CD4-positive, alpha-beta T cell (primary cell): ENCODE measurements at regions of chr4 and their contacts with region 1.

Region 1: GRCh38 chr4:109729718-109730618 is at the start of gene PLA2G12A:
- DNase-seq: peak; percentile 66 to 93 (median 80)
- ATAC-seq: peak; percentile 89
- H3K4me3 ChIP-seq: peak within 1 kb of the TSS; percentile 93
- H3K4me3 Mint-ChIP-seq: peak within 1 kb of the TSS; percentile 92
- H3K27ac ChIP-seq: peak within 1 kb of the TSS; percentile 35 to 38
- H3K27ac Mint-ChIP-seq: peak within 1 kb of the TSS; percentile 89
- H3K4me1 ChIP-seq: peaks cover 16% of the 10 kb centered on the region
- H3K4me1 Mint-ChIP-seq: peaks cover 33% of the 10 kb centered on the region
- H3K27me3 ChIP-seq: no peaks in the 10 kb centered on the region
- H3K27me3 Mint-ChIP-seq: no peaks in the 10 kb centered on the region
- CTCF ChIP-seq: no peak
- total RNA-seq, gene PLA2G12A: 9.6 to 10.5 TPM

Region 2: DNA sequence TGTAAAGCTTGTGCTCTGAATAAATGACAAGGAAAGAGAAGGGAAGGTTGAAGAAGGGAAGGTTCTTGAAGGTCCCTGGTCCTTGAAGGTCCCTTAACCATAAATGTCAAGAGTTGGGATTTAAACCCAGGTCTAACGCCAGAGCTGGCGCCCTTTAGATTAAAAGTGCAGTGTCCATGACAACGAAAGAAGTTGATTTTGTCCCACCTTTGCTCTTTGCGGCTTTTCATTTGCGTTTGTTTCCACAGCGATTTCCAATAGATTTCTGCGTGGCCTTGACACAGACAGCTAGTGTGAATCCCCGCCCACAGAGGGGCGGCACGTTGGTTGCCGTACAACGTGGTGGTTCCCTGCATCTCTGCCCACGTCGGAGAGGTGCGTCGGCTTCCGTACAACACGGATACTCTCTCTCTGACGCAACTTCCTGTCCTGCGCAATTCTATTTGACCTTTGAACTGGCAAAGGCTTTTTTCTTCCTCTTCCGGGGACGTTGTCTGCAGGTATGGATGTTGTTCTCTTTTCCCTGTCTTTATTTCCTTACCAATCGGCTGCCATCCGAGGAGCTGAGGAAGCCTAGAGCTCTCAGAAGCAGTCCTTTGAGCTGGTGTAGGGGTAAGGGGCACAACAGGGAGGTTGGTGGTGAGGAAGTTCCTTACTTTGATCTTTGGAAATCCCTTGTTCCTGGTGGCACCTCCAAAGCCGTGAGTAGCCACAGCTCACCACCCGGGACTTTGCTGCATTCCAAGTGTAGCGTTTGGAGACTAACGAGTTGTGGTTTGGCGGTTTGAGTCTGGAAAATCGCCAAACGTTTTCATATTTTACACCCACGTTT is 1109.7 kb before region 1 on chr4 and contains the start of gene RPL34:
- CTCF ChIA-PET with region 1: no interaction called
- POLR2A ChIA-PET with region 1: interaction called, 3 read pairs
- intact Hi-C with region 1: loop called in 1 of 2 experiments (anchors 10 kb)
- DNase-seq: peak; percentile 93 to 99 (median 97)
- ATAC-seq: peak; percentile 98
- H3K4me3 ChIP-seq: peak within 1 kb of the TSS; percentile 78
- H3K4me3 Mint-ChIP-seq: peak within 1 kb of the TSS; percentile 97
- H3K27ac ChIP-seq: peak within 1 kb of the TSS; percentile 85
- H3K27ac Mint-ChIP-seq: peak within 1 kb of the TSS; percentile 99
- H3K4me1 ChIP-seq: peaks cover 36% of the 10 kb centered on the region
- H3K4me1 Mint-ChIP-seq: peaks cover 65% of the 10 kb centered on the region
- H3K27me3 ChIP-seq: no peaks in the 10 kb centered on the region
- H3K27me3 Mint-ChIP-seq: no peaks in the 10 kb centered on the region
- CTCF ChIP-seq: no peak
- total RNA-seq, gene RPL34: 3,283 to 3,551 TPM

Region 3: GRCh38 chr4:108650212-108651013 is 1079.6 kb before region 1 on chr4 and contains the start of gene OSTC:
- CTCF ChIA-PET with region 1: no interaction called
- POLR2A ChIA-PET with region 1: no interaction called
- intact Hi-C with region 1: loop called in 1 of 2 experiments (anchors 10 kb)
- DNase-seq: peak; percentile 86 to 96 (median 89)
- ATAC-seq: peak; percentile 89
- H3K4me3 ChIP-seq: peak within 1 kb of the TSS; percentile 85
- H3K4me3 Mint-ChIP-seq: peak within 1 kb of the TSS; percentile 93
- H3K27ac ChIP-seq: peak within 1 kb of the TSS; percentile 84
- H3K27ac Mint-ChIP-seq: peak within 1 kb of the TSS; percentile 99
- H3K4me1 ChIP-seq: peaks cover 15% of the 10 kb centered on the region
- H3K4me1 Mint-ChIP-seq: peaks cover 50% of the 10 kb centered on the region
- H3K27me3 ChIP-seq: no peaks in the 10 kb centered on the region
- H3K27me3 Mint-ChIP-seq: no peaks in the 10 kb centered on the region
- CTCF ChIP-seq: peak; percentile 21
- total RNA-seq, gene OSTC: 21.8 to 25.5 TPM

Region 4: DNA sequence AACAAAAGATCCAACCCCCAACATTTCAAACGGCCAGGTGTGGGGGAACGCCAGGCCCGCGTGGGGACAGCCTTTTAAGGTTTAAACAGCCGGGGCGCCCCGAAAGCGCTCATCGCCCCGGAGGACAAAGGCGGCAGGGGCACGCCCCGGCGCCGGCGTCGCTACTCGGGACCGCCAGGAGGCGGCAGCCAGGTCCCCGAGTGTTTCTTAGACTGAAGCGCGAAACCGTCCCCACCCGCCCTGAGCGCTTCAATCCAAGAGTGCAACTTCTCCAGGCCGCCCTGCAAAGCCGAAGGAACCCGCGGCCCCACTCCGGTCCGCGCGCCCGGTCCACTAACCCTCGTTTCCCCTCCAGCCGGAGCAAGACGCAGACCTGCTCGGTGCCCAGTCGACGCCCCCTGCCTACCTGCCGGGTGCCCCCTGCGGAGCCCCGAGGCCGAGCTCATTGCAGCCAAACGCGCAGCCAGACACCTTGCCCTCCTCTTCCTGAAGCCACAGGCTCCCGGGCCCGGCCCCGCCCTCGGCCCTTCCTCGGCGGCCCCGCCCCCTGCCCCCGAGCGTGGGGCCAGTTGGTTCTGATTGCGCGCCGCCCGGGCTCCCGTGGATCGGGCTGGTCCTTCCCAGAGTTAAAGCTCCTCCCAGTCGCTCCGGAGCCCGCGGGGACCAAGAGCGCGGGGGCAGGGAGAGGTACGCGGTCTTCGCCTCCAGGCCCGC is 26.9 kb before region 1 on chr4 and contains the start of gene CASP6:
- CTCF ChIA-PET with region 1: interaction called, 13 read pairs
- POLR2A ChIA-PET with region 1: interaction called, 4 read pairs
- intact Hi-C with region 1: no loop called
- DNase-seq: peak; percentile 62 to 90 (median 73)
- ATAC-seq: peak; percentile 90
- H3K4me3 ChIP-seq: peak within 1 kb of the TSS; percentile 80
- H3K4me3 Mint-ChIP-seq: peak within 1 kb of the TSS; percentile 97
- H3K27ac ChIP-seq: peak within 1 kb of the TSS; percentile 39 to 60
- H3K27ac Mint-ChIP-seq: peak within 1 kb of the TSS; percentile 96
- H3K4me1 ChIP-seq: peaks cover 33% of the 10 kb centered on the region
- H3K4me1 Mint-ChIP-seq: peaks cover 50% of the 10 kb centered on the region
- H3K27me3 ChIP-seq: no peaks in the 10 kb centered on the region
- H3K27me3 Mint-ChIP-seq: no peaks in the 10 kb centered on the region
- CTCF ChIP-seq: peak; percentile 78
- total RNA-seq, gene CASP6: 5.4 to 5.5 TPM

Region 5: GRCh38 chr4:109708990-109709389 is 21.0 kb before region 1 on chr4:
- CTCF ChIA-PET with region 1: no interaction called
- POLR2A ChIA-PET with region 1: no interaction called
- intact Hi-C with region 1: loop called in 1 of 2 experiments (anchors 2 kb)
- DNase-seq: no peak
- ATAC-seq: no peak
- H3K4me3 ChIP-seq: no peak overlapping the region
- H3K4me3 Mint-ChIP-seq: no peak overlapping the region
- H3K27ac ChIP-seq: no peak overlapping the region
- H3K27ac Mint-ChIP-seq: no peak overlapping the region
- H3K4me1 ChIP-seq: peaks cover 2% of the 10 kb centered on the region
- H3K4me1 Mint-ChIP-seq: peaks cover 5% of the 10 kb centered on the region
- H3K27me3 ChIP-seq: no peaks in the 10 kb centered on the region
- H3K27me3 Mint-ChIP-seq: no peaks in the 10 kb centered on the region
- CTCF ChIP-seq: no peak

Region 6: GRCh38 chr4:109815151-109816081 is 85.4 kb after region 1 on chr4 and contains the start of gene GAR1:
- CTCF ChIA-PET with region 1: no interaction called
- POLR2A ChIA-PET with region 1: interaction called, 5 read pairs
- intact Hi-C with region 1: loop called (anchors 1 kb)
- DNase-seq: peak; percentile 68 to 96 (median 82)
- ATAC-seq: peak; percentile 91
- H3K4me3 ChIP-seq: peak within 1 kb of the TSS; percentile 67
- H3K4me3 Mint-ChIP-seq: peak within 1 kb of the TSS; percentile 96
- H3K27ac ChIP-seq: peak within 1 kb of the TSS; percentile 90 to 96
- H3K27ac Mint-ChIP-seq: peak within 1 kb of the TSS; percentile 98
- H3K4me1 ChIP-seq: peaks cover 18% of the 10 kb centered on the region
- H3K4me1 Mint-ChIP-seq: peaks cover 42% of the 10 kb centered on the region
- H3K27me3 ChIP-seq: no peaks in the 10 kb centered on the region
- H3K27me3 Mint-ChIP-seq: no peaks in the 10 kb centered on the region
- CTCF ChIP-seq: no peak
- total RNA-seq, gene GAR1: 8.4 to 9.6 TPM